ENCODE measurements at regions of chrX and their contacts with region 1.

Region 1: GRCh38 chrX:50456712-50457484 is 13.7 kb downstream of the DGKK start:
- DNase-seq: no peak
- ATAC-seq: no peak
- H3K4me3 ChIP-seq: no peak overlapping the region
- H3K27ac ChIP-seq: no peak overlapping the region
- H3K4me1 ChIP-seq: no peaks in the 10 kb centered on the region
- H3K27me3 ChIP-seq: no peaks in the 10 kb centered on the region
- CTCF ChIP-seq: no peak

Region 2: GRCh38 chrX:50432829-50433289 is 24.0 kb before region 1 on chrX:
- CTCF ChIA-PET with region 1: no interaction called
- POLR2A ChIA-PET with region 1: no interaction called
- in situ Hi-C with region 1: no loop called
- intact Hi-C with region 1: loop called (anchors 2 kb)
- DNase-seq: no peak
- ATAC-seq: no peak
- H3K4me3 ChIP-seq: no peak overlapping the region
- H3K27ac ChIP-seq: no peak overlapping the region
- H3K4me1 ChIP-seq: no peaks in the 10 kb centered on the region
- H3K27me3 ChIP-seq: peaks cover 2% of the 10 kb centered on the region; the same call in 1 of the 2 replicates
- CTCF ChIP-seq: no peak